CD8-positive, alpha-beta memory T cell (primary cell): ENCODE measurements at regions of chr6 and their contacts with region 1.

Region 1: DNA sequence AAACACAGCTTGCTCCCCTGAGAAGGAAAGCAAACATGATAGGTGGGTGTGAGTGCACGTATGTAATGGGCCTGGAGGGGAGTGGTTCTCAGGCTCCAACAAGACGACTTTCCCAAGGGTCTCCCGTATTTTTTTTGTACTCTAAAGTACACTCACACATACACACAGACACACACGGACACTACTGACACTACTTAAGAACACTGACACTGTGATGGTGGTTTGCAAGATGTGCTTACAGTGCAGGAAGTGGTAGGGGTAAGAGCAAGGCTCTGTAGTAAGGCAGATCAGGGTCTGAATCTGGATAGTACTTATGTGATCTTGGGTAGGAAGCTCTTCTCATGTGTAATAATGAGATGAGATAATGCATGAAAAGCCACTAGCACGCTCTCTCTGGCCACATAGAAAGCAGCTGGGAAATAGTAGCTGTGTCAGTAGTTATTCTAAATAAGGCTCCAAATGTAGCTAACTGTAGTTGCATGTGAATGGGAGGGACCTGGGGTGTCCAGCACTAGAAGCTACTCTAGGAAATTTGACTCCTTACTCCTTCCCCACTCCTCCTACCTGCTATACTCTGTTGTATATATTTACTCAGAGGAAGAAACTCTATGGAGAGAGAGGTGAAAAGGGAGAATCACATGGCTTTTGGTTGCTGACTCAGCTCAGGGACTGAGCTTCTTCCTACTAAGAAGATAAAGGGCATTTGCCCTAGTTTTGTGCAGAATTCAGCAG is 8.4 kb upstream of the ZBTB24 start:
- DNase-seq: peak in 2 of 5 donors; percentile 20 to 46
- H3K4me3 ChIP-seq: no peak overlapping the region
- H3K4me3 Mint-ChIP-seq: peak overlapping the region in 4 of 7 donors; percentile 2 to 68 (median 31)
- H3K27ac ChIP-seq: peak overlapping the region; percentile 25
- H3K27ac Mint-ChIP-seq: peak overlapping the region; percentile 15 to 93 (median 66)
- H3K4me1 ChIP-seq: peaks cover 15% of the 10 kb centered on the region
- H3K4me1 Mint-ChIP-seq: peaks cover 16 to 21% (median 17%) of the 10 kb centered on the region in 3 donors
- H3K27me3 ChIP-seq: no peaks in the 10 kb centered on the region
- H3K27me3 Mint-ChIP-seq: no peaks in the 10 kb centered on the region

Region 2: DNA sequence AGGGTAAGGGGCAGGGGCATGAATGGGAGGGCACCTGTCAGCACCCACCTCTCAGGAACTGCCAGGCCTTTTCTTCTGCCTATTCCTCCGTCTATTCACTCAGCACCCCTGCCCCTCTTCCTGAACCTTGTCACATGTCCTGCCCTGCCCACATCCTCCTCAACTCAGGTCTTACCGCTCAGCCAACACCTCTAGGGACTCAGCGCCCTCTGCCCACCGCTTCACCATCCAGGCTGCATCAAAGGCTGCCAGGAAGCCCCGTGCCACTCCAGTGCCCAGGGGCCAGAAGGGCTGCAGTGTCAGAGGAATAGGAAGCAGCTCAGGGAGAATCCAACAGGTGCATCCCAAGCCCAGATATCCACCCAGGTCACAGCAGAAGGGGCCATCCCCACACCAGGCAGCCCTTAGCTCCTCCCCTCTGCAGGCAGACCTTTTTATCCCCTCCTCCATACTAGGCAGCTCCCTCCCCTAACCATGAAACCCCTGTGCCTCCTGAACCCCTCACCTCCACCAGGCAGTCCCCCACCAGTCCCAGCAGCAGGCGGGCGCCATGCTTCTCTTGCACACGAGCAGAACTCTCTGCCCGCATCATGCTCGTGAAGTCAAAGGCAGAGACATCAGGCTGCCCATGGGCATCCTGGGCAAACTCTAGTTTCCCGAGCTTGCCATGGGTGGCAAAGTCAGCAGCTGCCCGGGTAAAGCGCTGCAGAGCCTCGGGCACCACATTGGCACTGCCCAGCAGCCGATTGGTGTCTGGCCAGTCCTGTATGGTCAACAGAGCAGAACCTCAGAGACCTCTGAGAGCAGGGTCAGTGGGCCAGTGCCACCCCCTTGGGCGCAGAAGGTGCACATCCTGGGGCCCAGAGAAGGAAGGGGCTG is 41.3 kb before region 1 on chr6:
- CTCF ChIA-PET with region 1: interaction called, 5 read pairs
- POLR2A ChIA-PET with region 1: interaction called, 14 read pairs
- DNase-seq: peak in 4 of 5 donors; percentile 11 to 68 (median 54)
- H3K4me3 ChIP-seq: peak overlapping the region; percentile 31
- H3K4me3 Mint-ChIP-seq: peak overlapping the region; percentile 5 to 82 (median 42)
- H3K27ac ChIP-seq: no peak overlapping the region
- H3K27ac Mint-ChIP-seq: peak overlapping the region; percentile 61 to 95 (median 89)
- H3K4me1 ChIP-seq: peaks cover 35% of the 10 kb centered on the region
- H3K4me1 Mint-ChIP-seq: peaks cover 43 to 61% (median 44%) of the 10 kb centered on the region in 3 donors
- H3K27me3 ChIP-seq: no peaks in the 10 kb centered on the region
- H3K27me3 Mint-ChIP-seq: peaks cover 0 to 1% of the 10 kb centered on the region in 2 donors

Region 3: DNA sequence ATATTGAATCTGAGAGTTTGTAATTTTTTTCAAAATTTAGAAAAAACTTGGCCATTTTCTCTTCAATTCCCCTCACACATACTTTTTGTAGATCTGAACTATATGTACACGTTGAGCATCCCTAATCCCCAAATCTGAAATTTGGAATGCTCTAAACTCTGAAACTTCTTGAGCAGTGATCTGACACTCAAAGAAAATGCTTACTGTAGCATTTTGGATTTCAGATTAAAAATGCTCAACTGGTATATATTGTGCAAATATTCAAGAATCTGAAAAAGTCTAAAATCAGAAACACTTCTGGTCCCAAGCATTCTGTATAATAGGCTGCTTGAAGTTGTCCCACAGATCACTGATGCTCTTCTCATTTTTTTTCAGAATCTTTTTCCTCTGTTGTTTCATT is 70.5 kb after region 1 on chr6:
- CTCF ChIA-PET with region 1: no interaction called
- POLR2A ChIA-PET with region 1: no interaction called
- DNase-seq: no peak
- H3K4me3 ChIP-seq: no peak overlapping the region
- H3K4me3 Mint-ChIP-seq: no peak overlapping the region
- H3K27ac ChIP-seq: no peak overlapping the region
- H3K27ac Mint-ChIP-seq: no peak overlapping the region
- H3K4me1 ChIP-seq: no peaks in the 10 kb centered on the region
- H3K4me1 Mint-ChIP-seq: no peaks in the 10 kb centered on the region
- H3K27me3 ChIP-seq: no peaks in the 10 kb centered on the region
- H3K27me3 Mint-ChIP-seq: no peaks in the 10 kb centered on the region

Region 4: DNA sequence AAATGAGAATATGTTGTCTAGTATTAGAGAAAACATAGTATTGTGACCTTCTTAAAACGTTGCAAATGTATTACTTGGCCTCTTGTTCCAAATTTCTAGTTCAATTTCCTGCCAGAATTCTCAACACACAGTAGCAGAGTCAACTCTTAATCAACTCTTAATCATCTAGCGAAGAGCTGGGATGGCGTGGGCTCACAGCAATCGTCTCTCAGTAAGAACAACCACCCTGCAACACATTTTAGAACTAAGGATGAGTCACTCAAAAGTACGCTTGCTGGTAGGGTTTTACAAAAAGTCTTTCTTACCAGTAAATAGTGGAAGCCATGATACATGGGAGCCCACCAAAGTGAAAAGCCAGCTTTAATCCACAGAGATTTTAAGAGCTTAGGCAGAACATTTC is 511.3 kb after region 1 on chr6:
- CTCF ChIA-PET with region 1: no interaction called
- POLR2A ChIA-PET with region 1: no interaction called
- DNase-seq: no peak
- H3K4me3 ChIP-seq: no peak overlapping the region
- H3K4me3 Mint-ChIP-seq: no peak overlapping the region
- H3K27ac ChIP-seq: no peak overlapping the region
- H3K27ac Mint-ChIP-seq: no peak overlapping the region
- H3K4me1 ChIP-seq: no peaks in the 10 kb centered on the region
- H3K4me1 Mint-ChIP-seq: no peaks in the 10 kb centered on the region
- H3K27me3 ChIP-seq: no peaks in the 10 kb centered on the region
- H3K27me3 Mint-ChIP-seq: peaks cover 33 to 73% of the 10 kb centered on the region in 2 donors